ENCODE measurements at regions of chr20 and their contacts with region 1.

Region 1: DNA sequence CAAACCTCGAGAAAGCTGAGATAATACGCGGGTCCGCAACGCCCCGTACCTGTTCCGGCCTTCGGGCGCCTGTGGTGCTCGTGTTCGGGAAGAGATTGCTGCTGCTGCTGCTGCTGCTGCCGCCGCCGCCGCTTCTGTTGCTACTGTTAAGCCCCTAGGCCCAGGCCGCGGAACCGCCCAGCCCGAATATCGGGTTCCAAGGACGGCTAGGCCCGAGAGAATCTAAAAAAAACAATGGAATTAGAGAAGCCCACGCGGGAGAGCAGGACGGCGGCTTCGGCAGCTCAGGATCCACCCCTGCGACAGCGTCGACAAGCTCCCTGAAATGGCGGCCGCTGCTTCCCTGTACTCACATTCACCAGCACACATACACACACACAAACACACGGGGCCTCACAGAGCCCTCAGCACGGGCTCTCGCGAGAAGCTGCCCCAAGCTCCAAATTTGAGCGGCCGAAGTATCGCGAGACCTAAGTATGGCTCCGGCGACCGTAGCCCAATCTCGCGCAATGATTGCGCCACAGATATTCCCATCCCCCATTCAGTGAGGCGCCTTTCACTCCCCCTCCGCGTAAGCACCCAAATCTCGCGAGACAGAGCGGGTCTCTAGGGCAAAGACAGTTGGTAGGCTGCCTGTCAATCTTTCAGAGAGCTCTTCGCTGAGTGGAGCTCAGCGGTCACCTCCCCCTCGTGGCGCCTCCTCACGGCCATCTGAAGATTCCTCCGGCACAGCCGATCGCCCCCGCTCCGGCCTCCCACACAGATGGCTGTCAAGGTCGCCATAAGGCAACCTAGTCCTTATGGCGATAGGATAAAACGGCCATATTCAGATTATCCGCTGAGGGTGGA is at the start of gene RBM39:
- DNase-seq: peak; percentile 100
- H3K4me3 Mint-ChIP-seq: peak within 1 kb of the TSS; percentile 97
- H3K27ac Mint-ChIP-seq: peak within 1 kb of the TSS; percentile 99
- H3K4me1 Mint-ChIP-seq: peaks cover 34% of the 10 kb centered on the region
- H3K27me3 Mint-ChIP-seq: no peaks in the 10 kb centered on the region
- total RNA-seq, gene RBM39: 358 and 360 TPM in 2 replicates

Region 2: DNA sequence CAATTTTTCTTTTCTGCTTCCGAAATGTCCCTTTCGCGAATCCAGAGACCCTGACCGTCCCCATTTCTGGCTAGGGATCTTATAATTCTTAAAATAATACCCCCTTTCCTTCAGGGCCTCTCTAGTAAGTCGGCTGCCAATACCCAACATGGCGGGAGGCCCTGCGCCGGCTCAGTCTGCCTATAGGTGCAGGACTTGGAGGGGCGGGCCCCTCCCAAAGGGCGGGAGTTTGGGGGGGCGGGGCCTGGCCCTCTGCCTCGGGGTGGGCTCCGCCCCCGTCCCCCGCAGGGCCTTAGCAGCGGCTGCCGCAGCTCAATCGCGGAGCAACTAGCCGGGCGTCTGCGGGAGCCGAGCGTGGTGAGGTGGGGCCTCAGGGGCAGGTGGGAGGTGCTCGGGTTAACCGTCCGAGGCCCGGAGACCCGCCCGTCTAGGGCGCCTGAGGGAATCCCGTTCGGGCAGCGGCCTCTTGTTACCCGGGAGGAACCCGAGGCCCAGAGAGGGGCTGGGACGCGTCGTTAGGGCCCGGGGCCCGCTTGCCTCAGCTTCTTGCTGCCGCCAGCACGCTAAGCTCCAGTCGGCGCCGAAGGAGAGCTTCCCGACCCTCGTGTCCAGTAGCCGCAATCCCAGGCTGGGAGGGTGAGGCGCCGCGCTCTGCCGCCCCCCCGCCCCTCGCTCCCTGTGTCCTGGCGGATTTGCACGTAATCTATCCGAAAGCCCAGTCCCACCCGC is 287.1 kb before region 1 on chr20 and contains the start of gene CEP250:
- intact Hi-C with region 1: loop called (anchors 2 kb)
- DNase-seq: peak; percentile 89
- H3K4me3 Mint-ChIP-seq: peak within 1 kb of the TSS; percentile 88
- H3K27ac Mint-ChIP-seq: peak within 1 kb of the TSS; percentile 98
- H3K4me1 Mint-ChIP-seq: peaks cover 18% of the 10 kb centered on the region
- H3K27me3 Mint-ChIP-seq: no peaks in the 10 kb centered on the region
- total RNA-seq, gene CEP250: 51.0 and 54.6 TPM in 2 replicates

Region 3: GRCh38 chr20:35664544-35665221 is 77.4 kb before region 1 on chr20 and contains the starts of genes CPNE1 and RBM12:
- intact Hi-C with region 1: loop called (anchors 1 kb)
- DNase-seq: peak; percentile 93
- H3K4me3 Mint-ChIP-seq: peak within 1 kb of the TSS; percentile 95
- H3K27ac Mint-ChIP-seq: peak within 1 kb of the TSS; percentile 99
- H3K4me1 Mint-ChIP-seq: peaks cover 41% of the 10 kb centered on the region
- H3K27me3 Mint-ChIP-seq: no peaks in the 10 kb centered on the region
- total RNA-seq, gene CPNE1: 342 and 347 TPM in 2 replicates
- total RNA-seq, gene RBM12: 147 and 148 TPM in 2 replicates

Region 4: DNA sequence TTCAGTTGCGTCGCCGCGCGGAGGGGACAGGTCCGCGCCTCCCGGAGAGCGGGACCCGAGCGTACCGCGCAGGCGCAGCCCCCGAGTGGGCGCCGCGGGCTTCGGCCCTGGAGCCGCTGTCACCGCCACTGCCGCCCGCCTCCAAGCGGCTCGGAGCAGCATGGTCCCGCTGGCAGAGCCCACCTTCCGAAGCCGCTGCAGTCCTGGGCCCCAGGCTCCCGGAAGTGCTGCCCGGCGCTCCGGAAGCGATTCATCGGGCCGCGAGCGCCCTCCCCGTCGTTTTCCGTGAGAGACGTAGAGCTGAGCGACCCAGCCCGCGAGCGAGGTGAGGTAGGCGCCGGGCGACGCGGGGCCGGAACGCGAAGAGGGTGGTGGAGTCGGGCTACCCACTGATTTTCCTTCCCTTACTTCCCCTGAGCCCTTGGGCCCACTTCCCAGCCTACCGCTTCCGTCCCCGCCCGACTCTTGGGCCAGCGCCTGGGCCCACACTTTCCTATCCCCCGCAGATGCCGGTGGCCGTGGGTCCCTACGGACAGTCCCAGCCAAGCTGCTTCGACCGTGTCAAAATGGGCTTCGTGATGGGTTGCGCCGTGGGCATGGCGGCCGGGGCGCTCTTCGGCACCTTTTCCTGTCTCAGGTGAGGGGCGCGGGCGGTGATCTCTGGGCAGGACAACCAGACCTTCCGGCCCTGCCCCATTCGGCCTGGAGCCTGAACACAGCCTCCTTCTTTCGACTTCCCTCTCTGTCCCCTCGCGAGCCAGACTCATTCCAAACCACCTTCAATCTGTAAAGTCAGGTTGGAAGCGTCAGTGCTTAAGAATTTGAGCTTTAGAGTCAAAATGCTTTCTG is 42.8 kb before region 1 on chr20 and contains the starts of genes NFS1 and ROMO1:
- intact Hi-C with region 1: loop called (anchors 2 kb)
- DNase-seq: peak; percentile 82
- H3K4me3 Mint-ChIP-seq: peak within 1 kb of the TSS; percentile 94
- H3K27ac Mint-ChIP-seq: peak within 1 kb of the TSS; percentile 94
- H3K4me1 Mint-ChIP-seq: peaks cover 31% of the 10 kb centered on the region
- H3K27me3 Mint-ChIP-seq: no peaks in the 10 kb centered on the region
- total RNA-seq, gene NFS1: 39.1 and 39.8 TPM in 2 replicates
- total RNA-seq, gene ROMO1: 93.0 and 98.4 TPM in 2 replicates

Region 5: GRCh38 chr20:35771689-35772562 is 29.8 kb after region 1 on chr20 and contains the start of gene PHF20:
- intact Hi-C with region 1: loop called (anchors 1 kb)
- DNase-seq: peak; percentile 98
- H3K4me3 Mint-ChIP-seq: peak within 1 kb of the TSS; percentile 88
- H3K27ac Mint-ChIP-seq: peak within 1 kb of the TSS; percentile 87
- H3K4me1 Mint-ChIP-seq: peaks cover 46% of the 10 kb centered on the region
- H3K27me3 Mint-ChIP-seq: no peaks in the 10 kb centered on the region
- total RNA-seq, gene PHF20: 55.1 and 64.3 TPM in 2 replicates

Region 6: GRCh38 chr20:35883778-35884540 is 141.8 kb after region 1 on chr20:
- intact Hi-C with region 1: loop called (anchors 5 kb)
- DNase-seq: peak; percentile 34
- H3K4me3 Mint-ChIP-seq: no peak overlapping the region
- H3K27ac Mint-ChIP-seq: no peak overlapping the region
- H3K4me1 Mint-ChIP-seq: peaks cover 8% of the 10 kb centered on the region
- H3K27me3 Mint-ChIP-seq: no peaks in the 10 kb centered on the region

Region 7: DNA sequence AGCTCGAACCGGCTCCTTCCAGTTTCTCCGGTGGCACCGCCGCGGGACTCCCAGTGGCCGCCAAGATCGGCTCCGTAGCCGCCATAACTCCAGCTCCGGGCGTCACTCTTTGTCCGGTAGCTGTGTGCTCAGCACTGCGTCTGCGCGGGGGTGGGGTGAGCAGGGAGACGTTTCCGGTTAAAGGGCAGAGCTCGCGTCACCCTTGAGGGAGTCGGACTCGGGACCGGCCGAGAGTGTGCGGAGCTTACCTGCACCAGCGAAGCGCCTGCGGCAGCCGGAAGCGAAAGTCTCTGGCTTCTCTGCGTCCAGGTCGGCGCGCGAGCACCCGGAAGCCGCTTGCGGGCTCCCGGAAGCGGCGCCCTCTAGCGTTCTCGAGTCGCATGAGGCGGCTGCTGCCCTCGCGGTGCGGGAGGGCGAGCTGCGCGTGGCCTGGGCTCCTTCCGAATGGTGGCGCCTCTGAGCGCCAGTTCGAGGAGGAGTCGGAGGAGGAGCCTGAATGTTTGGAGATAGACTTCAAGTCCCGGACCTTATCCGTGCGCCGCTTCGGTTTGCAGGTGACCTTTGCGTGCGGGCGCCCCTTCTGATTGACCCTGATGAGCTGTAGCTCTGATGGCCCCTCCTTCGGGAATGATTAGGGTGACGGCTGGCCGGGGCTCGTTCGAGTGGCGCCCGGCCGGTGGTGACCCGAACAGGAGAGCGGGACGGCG is 212.2 kb after region 1 on chr20 and contains the start of gene SCAND1:
- intact Hi-C with region 1: loop called (anchors 1 kb)
- DNase-seq: peak; percentile 97
- H3K4me3 Mint-ChIP-seq: peak within 1 kb of the TSS; percentile 100
- H3K27ac Mint-ChIP-seq: peak within 1 kb of the TSS; percentile 100
- H3K4me1 Mint-ChIP-seq: peaks cover 13% of the 10 kb centered on the region
- H3K27me3 Mint-ChIP-seq: no peaks in the 10 kb centered on the region
- total RNA-seq, gene SCAND1: 39.5 and 40.3 TPM in 2 replicates

Measured in activated T-helper 2 cell treated with anti-CD3 and anti-CD28 coated beads, Interferon-gamma antibody, Interleukin-2, Interleukin-4, amounts not matched to agents 10 μg/mL and 5 μg/mL and 100 μg/mL, durations not matched to agents 14 hours and 24 hours and 36 hours (primary cell).